ENCODE measurements at regions of chr1 and their contacts with region 1.

Region 1: GRCh38 chr1:42173155-42173933 is 8.8 kb upstream of the GUCA2A start:
- DNase-seq: peak; percentile 80

Region 2: GRCh38 chr1:42146626-42147320 is 26.6 kb before region 1 on chr1:
- CTCF ChIA-PET with region 1: interaction called, 10 read pairs
- POLR2A ChIA-PET with region 1: no interaction called
- DNase-seq: peak; percentile 74

Region 3: GRCh38 chr1:42250164-42250563 is 76.8 kb after region 1 on chr1:
- CTCF ChIA-PET with region 1: no interaction called
- POLR2A ChIA-PET with region 1: no interaction called
- DNase-seq: no peak